ENCODE measurements at regions of chr17 and their contacts with region 1.

Region 1: GRCh38 chr17:58447039-58447975 is 30.0 kb upstream of the RNF43 start:
- DNase-seq: peak; percentile 36 to 56
- ATAC-seq: no peak
- H3K4me3 ChIP-seq: no peak overlapping the region
- H3K27ac ChIP-seq: no peak overlapping the region
- H3K4me1 ChIP-seq: no peaks in the 10 kb centered on the region
- H3K27me3 ChIP-seq: no peaks in the 10 kb centered on the region
- CTCF ChIP-seq: peak; percentile 47

Region 2: DNA sequence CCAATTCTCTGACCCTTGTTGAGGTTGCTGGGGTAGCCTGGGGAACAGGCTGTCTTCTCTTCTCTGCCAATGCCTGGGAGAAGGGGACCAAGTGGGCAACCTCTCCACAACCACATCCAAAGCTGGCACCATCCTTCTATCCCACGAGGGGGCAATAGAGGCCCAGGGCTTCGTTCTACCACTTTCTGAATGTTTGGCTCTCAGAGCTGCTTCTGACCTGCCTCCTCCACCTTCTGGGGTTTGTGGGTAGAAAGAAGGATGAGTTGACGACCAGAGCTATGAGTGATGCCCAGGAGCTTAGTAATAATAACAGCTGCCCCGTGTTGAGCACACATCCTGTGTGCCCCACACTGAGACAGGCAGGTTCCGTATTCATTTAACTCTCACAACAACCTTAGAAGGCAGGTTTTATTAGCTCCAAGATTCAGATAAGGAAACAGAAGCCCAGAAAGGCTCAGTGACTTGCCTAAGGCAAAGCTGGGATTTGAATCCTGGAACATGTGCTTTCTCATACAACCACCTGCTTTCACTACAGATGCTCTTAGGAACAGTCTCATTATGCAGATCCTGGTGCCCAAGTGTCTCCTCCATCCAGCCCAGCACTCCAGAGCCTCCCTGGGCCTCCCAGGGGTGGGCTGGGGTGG is 129.8 kb before region 1 on chr17:
- intact Hi-C with region 1: loop called in 1 of 2 experiments (anchors 5 kb)
- DNase-seq: no peak
- ATAC-seq: peak in 1 of 4 donors; percentile 19
- H3K4me3 ChIP-seq: no peak overlapping the region
- H3K27ac ChIP-seq: no peak overlapping the region
- H3K4me1 ChIP-seq: no peaks in the 10 kb centered on the region
- H3K27me3 ChIP-seq: no peaks in the 10 kb centered on the region
- CTCF ChIP-seq: peak; percentile 24

Region 3: GRCh38 chr17:58513965-58514774 is 66.9 kb after region 1 on chr17 and contains the start of gene MTMR4:
- intact Hi-C with region 1: no loop called
- DNase-seq: peak; percentile 80 to 86
- ATAC-seq: peak in 2 of 4 donors; percentile 18 to 28
- H3K4me3 ChIP-seq: peak within 1 kb of the TSS; percentile 77
- H3K27ac ChIP-seq: peak within 1 kb of the TSS; percentile 72
- H3K4me1 ChIP-seq: peaks cover 26% of the 10 kb centered on the region
- H3K27me3 ChIP-seq: no peaks in the 10 kb centered on the region
- CTCF ChIP-seq: no peak
- total RNA-seq, gene MTMR4: 4.5 to 11.2 (median 10.8) TPM

Region 4: DNA sequence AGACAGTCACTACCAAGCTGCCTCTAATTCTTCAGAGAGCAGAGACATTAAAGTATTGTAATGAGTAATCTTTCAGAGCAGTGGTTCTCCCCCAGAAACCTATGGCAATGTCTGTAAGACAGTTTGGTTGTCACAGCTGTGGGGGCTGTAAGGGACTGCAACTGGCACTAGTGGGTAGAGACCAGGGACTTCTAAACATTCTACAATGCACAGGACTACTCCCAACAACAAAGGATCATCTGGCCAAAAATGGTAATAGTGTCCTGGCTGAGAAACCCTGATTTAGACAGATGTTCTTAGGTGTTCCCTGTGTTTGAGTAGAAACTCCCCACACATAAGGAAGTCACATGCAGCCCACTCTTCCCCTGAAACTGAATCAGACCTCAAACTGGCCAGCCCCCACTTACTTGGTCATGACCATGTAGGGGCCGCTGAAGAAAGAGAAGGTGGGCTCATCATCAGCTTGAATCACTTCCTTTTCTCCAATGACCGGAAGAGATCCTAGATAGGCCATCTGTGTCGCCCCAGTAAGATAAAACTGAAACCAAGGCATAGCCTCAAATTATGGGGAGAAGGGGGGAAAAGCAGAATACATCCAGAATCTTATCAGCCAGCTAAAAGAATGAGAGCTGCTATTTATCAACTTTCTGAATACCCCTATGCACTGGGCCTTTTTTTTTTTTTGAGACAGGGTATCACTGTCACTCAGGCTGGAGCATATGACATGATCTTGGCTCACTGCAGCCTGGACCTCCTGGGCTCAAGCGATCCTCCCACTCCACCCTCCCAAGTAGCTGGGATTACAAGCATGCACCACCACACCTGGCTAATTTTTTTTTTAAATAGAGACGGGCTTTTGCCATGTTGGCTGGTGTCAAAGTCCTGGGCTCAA is 168.7 kb after region 1 on chr17:
- intact Hi-C with region 1: no loop called
- DNase-seq: no peak
- ATAC-seq: no peak
- H3K4me3 ChIP-seq: no peak overlapping the region
- H3K27ac ChIP-seq: no peak overlapping the region
- H3K4me1 ChIP-seq: no peaks in the 10 kb centered on the region
- H3K27me3 ChIP-seq: no peaks in the 10 kb centered on the region
- CTCF ChIP-seq: no peak